ENCODE measurements at regions of chr1 and their contacts with region 1.

Region 1: DNA sequence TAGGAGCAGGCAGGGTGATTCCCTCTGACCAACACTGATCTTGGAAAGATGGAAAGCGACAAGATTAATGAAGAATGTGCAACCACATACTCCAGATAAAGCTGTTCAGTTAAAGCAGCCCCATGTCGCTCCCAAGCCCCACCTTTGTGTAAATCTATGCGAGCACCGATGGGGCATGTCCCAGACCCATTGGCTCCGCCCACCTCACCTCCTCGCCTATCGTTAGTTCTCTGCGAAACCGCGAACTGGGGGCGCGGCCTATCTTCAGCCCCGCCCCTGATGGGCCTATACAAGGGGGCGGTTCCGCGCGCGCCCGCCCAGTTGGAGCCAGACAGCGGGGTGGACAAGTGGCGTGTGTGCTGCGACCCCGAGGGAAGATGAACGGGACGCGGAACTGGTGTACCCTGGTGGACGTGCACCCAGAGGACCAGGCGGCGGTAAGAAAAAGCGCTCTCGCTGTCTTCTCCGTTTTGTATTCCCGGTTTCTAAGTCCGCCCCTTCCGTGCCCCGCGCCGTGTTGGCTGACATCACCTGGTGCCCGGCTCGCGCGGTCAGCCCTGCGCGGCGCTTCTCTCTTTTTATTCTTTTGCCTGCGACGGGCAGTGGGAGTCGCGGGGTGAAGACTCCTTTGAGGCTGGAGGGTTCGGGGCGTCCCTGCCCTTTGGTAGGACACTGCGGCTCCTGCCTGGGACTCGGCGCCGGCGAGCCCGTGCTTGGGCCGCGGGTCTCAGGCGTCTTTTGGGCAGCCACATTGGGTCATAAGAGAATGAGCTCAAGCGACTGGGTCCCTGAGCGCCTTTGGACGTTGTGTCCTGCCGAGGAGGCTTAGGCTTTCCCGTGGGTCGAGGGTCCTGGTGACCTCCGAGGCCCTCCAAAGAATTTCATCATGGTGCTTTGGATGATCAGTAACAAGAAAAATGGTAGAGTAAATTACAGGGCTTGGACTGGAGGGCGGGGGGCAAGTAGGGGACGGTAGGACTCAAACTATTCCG is at the start of gene TUFT1:
- DNase-seq: peak; percentile 97
- ATAC-seq: peak; percentile 99
- H3K4me3 Mint-ChIP-seq: peak within 1 kb of the TSS; percentile 90
- H3K27ac Mint-ChIP-seq: peak within 1 kb of the TSS; percentile 69
- H3K4me1 Mint-ChIP-seq: peaks cover 21% of the 10 kb centered on the region
- H3K27me3 Mint-ChIP-seq: peaks cover 7% of the 10 kb centered on the region
- total RNA-seq, gene TUFT1: 3.2 TPM

Region 2: DNA sequence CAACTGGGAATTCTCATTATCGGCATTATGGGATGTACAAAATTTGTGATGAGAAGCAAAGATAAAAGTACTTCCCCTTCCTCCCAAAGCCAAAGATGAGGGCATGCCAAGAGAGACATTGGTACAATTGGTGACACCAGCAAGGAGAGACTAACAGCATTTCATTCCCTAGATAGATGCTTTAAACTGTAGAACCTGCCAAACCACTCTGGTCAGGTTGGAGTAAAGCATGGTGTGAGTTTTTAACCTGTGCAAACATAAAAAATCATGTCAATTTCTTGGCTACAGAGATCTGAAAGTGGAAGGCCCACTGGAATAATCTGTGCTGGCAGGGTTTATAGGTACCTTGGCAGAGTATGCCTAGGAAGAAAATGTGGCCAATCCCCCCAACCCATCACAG is 633.9 kb before region 1 on chr1:
- CTCF ChIA-PET with region 1: no interaction called
- POLR2A ChIA-PET with region 1: no interaction called
- intact Hi-C with region 1: no loop called
- DNase-seq: no peak
- ATAC-seq: no peak
- H3K4me3 Mint-ChIP-seq: no peak overlapping the region
- H3K27ac Mint-ChIP-seq: no peak overlapping the region
- H3K4me1 Mint-ChIP-seq: peaks cover 7% of the 10 kb centered on the region
- H3K27me3 Mint-ChIP-seq: no peaks in the 10 kb centered on the region

Region 3: GRCh38 chr1:151443846-151444782 is 96.2 kb before region 1 on chr1:
- CTCF ChIA-PET with region 1: interaction called, 6 read pairs
- POLR2A ChIA-PET with region 1: no interaction called
- intact Hi-C with region 1: loop called (anchors 2 to 10 kb)
- DNase-seq: peak; percentile 80
- ATAC-seq: peak; percentile 96
- H3K4me3 Mint-ChIP-seq: no peak overlapping the region
- H3K27ac Mint-ChIP-seq: peak overlapping the region; percentile 42
- H3K4me1 Mint-ChIP-seq: peaks cover 59% of the 10 kb centered on the region
- H3K27me3 Mint-ChIP-seq: no peaks in the 10 kb centered on the region

Region 4: DNA sequence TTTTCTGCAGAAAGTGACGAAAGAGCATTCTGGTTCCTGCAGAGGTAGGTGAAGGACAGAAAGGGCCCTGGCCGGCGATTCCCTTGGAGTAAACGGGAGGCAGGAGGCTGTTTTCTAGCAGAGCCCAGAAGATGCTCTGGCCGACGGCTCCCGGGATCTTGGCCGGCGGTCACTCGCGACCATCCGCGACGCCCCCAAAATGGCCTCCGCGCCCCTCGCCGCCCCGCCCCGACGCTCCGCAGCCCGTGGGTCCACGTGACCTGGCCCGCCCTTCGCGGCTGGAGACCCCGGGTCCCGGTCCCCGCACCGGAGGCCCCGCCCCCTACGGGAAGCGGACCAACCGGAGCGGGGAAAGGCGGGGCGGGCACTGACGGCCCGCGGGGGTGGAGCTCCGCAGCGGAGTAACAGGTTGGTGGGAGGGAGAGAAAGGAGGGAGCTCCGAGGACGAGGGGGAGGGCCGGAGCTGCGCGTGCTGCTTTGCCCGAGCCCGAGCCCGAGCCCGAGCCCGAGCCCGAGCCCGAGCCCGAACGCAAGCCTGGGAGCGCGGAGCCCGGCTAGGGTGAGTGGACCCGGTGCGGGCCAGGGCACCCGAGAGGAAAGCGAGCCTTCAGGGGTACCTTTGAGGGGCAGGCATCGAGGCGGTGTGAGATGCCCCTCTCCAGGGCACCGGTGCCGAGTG is 29.2 kb before region 1 on chr1 and contains the start of gene CGN:
- CTCF ChIA-PET with region 1: interaction called, 6 read pairs
- POLR2A ChIA-PET with region 1: no interaction called
- intact Hi-C with region 1: loop called in 1 of 2 experiments (anchors 1 kb)
- DNase-seq: peak; percentile 91
- ATAC-seq: peak; percentile 98
- H3K4me3 Mint-ChIP-seq: peak within 1 kb of the TSS; percentile 80
- H3K27ac Mint-ChIP-seq: peak within 1 kb of the TSS; percentile 47
- H3K4me1 Mint-ChIP-seq: peaks cover 23% of the 10 kb centered on the region
- H3K27me3 Mint-ChIP-seq: no peaks in the 10 kb centered on the region
- total RNA-seq, gene CGN: 0.67 to 1.4 TPM

Region 5: DNA sequence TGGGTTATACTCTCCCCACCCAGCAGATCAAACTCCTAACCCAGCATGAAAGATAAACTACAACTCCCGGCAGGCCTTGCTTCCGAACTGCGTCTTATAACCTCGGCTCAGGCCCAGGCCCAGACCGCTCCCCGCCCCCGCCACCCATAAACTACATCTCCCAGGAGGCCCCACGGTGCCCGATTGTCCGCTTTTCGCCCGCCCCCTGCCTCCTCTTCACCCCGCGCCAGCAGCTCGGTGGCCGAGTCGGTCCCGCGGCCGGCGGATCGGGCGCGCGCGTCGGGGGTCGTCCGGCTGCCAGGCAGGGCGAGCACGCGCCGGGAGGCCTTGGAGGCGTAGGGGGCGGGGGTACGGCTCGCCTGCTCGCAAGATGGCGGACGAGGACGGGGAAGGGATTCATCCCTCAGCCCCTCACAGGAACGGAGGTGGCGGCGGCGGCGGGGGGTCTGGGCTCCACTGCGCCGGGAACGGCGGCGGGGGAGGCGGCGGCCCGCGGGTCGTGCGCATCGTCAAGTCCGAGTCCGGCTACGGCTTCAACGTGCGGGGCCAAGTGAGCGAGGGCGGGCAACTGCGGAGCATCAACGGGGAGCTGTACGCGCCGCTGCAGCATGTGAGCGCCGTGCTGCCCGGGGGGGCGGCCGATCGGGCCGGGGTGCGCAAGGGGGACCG is 71.7 kb after region 1 on chr1 and contains the start of gene SNX27:
- CTCF ChIA-PET with region 1: interaction called, 3 read pairs
- POLR2A ChIA-PET with region 1: no interaction called
- intact Hi-C with region 1: loop called in 1 of 2 experiments (anchors 1 kb)
- DNase-seq: peak; percentile 95
- ATAC-seq: peak; percentile 93
- H3K4me3 Mint-ChIP-seq: peak within 1 kb of the TSS; percentile 99
- H3K27ac Mint-ChIP-seq: peak within 1 kb of the TSS; percentile 95
- H3K4me1 Mint-ChIP-seq: peaks cover 46% of the 10 kb centered on the region
- H3K27me3 Mint-ChIP-seq: peaks cover 6% of the 10 kb centered on the region
- total RNA-seq, gene SNX27: 28.5 to 29.1 TPM

Region 6: DNA sequence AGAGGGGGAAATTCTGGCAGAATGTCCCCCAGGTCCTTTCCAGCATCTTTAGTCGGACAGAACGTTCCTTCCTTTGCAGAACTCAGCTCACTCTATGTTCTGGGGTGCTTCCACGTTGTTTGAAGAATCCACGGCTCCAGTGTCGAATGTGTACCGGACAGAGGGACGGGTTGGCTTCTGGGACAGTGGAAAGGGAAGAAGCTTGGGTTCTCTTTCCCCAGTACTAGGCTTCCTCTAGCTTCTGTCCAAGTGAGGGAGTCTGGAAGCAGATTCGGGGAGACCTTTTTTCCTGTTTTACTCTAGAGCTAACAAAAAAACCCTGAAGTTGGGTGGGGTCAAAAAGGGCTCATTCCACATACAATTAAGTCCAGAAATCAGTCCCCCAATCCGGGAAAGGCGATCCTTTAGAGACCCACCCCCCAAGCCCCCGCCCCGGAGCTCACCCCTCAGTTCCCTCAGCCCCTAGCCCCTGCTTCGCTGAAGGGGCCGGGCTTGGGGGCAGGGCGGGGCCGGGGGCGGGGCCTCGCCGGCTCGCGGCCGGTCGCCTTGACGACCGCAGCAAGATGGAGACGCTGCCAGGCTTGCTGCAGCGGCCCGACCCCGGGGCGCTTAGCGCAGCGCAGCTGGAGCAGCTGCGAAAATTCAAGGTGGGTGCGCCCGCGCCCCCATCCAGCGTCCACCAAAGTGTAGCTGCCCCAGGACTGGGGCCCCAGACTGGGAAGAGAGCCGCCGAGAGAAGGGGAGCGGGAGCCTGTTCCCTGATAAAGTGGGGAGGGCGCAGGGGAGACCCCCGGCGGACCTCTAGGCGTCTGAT is 180.9 kb after region 1 on chr1 and contains the start of gene RIIAD1:
- CTCF ChIA-PET with region 1: no interaction called
- POLR2A ChIA-PET with region 1: no interaction called
- intact Hi-C with region 1: loop called in 1 of 2 experiments (anchors 1 kb)
- DNase-seq: peak; percentile 67
- ATAC-seq: peak; percentile 89
- H3K4me3 Mint-ChIP-seq: peak within 1 kb of the TSS; percentile 61
- H3K27ac Mint-ChIP-seq: no peak within 1 kb of the TSS
- H3K4me1 Mint-ChIP-seq: peaks cover 21% of the 10 kb centered on the region
- H3K27me3 Mint-ChIP-seq: peaks cover 55% of the 10 kb centered on the region
- total RNA-seq, gene RIIAD1: not detected

Region 7: DNA sequence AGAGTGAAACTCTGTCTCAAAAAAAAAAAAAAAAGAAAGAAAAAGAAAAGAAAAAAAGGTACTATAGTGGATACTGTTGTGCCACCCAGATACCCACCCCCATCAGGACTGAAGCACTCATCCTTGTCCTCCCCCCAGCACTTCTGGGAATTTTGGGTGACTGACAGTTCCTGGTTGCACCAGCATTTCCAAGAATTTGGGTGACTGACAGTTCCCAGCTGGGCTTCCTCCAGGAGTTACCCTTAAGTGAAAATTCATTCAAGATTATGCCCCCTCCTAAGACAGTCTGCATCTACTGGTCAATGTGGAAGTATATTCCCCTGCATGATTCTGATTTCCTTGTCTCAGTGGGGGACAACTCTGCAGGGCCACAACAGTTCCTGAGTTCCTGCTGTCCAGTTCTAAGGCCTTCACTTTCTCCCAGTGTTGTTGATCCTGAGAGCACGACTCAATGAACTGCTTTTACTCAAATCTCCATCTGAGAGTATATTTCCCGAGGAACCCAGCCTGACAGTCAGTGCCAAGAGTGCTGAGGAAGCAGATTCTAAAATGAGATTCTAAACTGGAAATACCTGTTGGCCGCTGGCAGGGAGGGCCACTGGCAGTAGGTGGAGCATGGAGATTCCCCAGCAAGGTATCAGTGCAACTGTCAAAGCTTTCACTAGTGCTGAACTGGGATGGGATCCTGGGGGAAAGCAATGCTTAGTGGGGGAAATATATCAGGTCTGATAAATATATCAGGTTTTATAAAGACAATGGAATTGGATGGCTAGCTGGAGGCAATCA is 199.5 kb after region 1 on chr1:
- CTCF ChIA-PET with region 1: interaction called, 3 read pairs
- POLR2A ChIA-PET with region 1: no interaction called
- intact Hi-C with region 1: loop called in 1 of 2 experiments (anchors 5 kb)
- DNase-seq: no peak
- ATAC-seq: no peak
- H3K4me3 Mint-ChIP-seq: no peak overlapping the region
- H3K27ac Mint-ChIP-seq: no peak overlapping the region
- H3K4me1 Mint-ChIP-seq: no peaks in the 10 kb centered on the region
- H3K27me3 Mint-ChIP-seq: peaks cover 1% of the 10 kb centered on the region

Region 8: GRCh38 chr1:151909150-151910149 is 369.2 kb after region 1 on chr1 and contains the start of gene THEM4:
- CTCF ChIA-PET with region 1: no interaction called
- POLR2A ChIA-PET with region 1: interaction called, 3 read pairs
- intact Hi-C with region 1: loop called in 1 of 2 experiments (anchors 2 kb)
- DNase-seq: peak; percentile 98
- ATAC-seq: peak; percentile 93
- H3K4me3 Mint-ChIP-seq: peak within 1 kb of the TSS; percentile 82
- H3K27ac Mint-ChIP-seq: peak within 1 kb of the TSS; percentile 91
- H3K4me1 Mint-ChIP-seq: peaks cover 42% of the 10 kb centered on the region
- H3K27me3 Mint-ChIP-seq: no peaks in the 10 kb centered on the region
- total RNA-seq, gene THEM4: 23.9 to 26.0 TPM